Activated T-helper 2 cell treated with anti-CD3 and anti-CD28 coated beads, Interferon-gamma antibody, Interleukin-2, Interleukin-4, amounts not matched to agents 10 μg/mL and 5 μg/mL and 100 μg/mL, durations not matched to agents 14 hours and 24 hours and 36 hours (primary cell): ENCODE measurements at regions of chr2 and their contacts with region 1.

Region 1: DNA sequence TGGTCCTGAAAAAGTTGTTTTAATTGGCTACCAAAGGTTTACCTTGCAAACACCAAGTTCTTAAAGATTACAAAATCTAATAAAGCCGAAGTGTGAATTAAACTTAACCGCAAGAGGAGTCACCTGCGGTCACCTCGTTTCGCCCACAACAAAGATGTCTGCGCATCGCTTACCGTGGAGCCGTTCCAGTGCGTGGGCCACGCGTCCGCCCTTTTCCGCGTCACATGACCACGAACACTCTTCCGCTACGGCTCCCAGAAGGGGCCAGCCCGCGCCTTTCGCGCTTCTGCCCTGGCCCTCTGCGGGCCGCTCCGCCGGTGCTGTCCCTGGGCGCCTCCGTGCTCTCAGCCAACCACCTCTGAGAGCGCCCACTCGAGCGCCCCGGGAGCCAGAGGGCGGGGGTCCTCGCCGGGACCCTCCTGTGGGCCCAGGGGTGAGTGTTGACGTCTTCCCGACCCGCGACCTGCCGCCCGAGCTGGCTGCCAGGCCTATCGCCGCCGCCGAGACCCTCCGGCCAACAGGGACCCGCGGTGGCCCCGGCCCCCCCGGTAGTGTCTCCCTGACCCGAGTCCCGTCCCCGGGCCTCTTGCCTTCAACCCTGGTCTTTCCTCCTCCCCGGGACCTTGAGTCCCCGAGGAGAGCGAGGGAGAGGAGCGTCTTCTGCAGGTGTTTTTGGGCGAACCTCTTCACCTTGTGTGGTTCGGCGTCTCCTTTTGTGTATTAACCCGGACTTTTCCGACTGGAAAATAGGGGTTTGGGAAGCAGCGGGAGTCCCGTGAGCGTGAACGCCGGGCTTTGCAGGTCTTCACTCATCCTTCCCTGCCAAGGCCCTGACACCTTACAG is at the start of gene MFF:
- DNase-seq: peak; percentile 89
- H3K4me3 Mint-ChIP-seq: peak within 1 kb of the TSS; percentile 90
- H3K27ac Mint-ChIP-seq: peak within 1 kb of the TSS; percentile 90
- H3K4me1 Mint-ChIP-seq: peaks cover 31% of the 10 kb centered on the region
- H3K27me3 Mint-ChIP-seq: peaks cover 5% of the 10 kb centered on the region
- total RNA-seq, gene MFF: 74.4 and 77.3 TPM in 2 replicates

Region 2: DNA sequence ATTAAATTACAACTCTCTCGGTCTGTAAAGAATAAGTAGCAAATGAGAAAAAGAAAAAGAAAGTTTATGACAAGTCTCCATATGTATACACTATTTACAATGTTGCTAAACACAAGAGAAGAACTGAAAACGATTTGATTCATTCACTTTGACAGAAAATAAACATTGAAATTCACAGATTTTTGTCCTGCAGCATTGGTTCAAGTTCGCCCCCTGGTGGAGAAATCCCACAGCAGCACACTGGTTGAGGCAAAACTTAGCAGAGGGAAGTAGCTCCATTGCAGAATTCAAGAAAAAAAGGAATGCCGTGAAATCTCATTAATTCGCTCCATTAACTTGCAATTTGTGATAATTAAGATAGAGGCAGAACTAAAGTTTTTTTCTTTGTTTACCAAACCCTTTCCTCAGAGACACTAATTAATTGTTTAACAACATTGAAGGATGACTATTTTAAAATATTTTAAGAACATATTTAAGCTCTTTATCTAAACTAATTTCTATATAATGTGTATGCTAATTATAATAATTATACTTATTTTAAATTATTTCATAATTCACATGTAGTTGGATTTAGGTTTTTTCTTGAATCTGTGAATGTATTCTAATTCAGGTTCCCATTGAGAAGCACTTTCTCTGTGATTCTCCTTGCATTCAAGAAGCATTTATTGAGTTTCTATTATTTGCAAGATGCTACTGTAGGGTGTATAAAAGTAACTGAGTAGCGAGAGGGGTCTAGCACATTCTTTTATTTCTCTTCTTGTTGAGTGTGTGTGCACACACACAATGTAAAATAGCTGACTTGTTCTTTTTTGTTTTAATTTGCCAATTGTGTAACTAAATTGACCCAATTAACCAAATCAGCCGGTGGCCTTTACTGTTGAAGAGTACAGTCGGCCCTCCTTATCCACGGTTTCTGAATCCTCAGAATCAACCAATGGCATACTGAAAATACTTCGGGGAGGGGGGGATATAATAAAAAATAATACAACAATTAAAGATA is 86.7 kb before region 1 on chr2:
- intact Hi-C with region 1: no loop called
- DNase-seq: peak; percentile 14
- H3K4me3 Mint-ChIP-seq: no peak overlapping the region
- H3K27ac Mint-ChIP-seq: no peak overlapping the region
- H3K4me1 Mint-ChIP-seq: no peaks in the 10 kb centered on the region
- H3K27me3 Mint-ChIP-seq: peaks cover 6% of the 10 kb centered on the region

Region 3: GRCh38 chr2:227335713-227336112 is 10.5 kb after region 1 on chr2:
- intact Hi-C with region 1: loop called (anchors 1 kb)
- DNase-seq: no peak
- H3K4me3 Mint-ChIP-seq: no peak overlapping the region
- H3K27ac Mint-ChIP-seq: peak overlapping the region; percentile 72
- H3K4me1 Mint-ChIP-seq: peaks cover 27% of the 10 kb centered on the region
- H3K27me3 Mint-ChIP-seq: no peaks in the 10 kb centered on the region

Region 4: DNA sequence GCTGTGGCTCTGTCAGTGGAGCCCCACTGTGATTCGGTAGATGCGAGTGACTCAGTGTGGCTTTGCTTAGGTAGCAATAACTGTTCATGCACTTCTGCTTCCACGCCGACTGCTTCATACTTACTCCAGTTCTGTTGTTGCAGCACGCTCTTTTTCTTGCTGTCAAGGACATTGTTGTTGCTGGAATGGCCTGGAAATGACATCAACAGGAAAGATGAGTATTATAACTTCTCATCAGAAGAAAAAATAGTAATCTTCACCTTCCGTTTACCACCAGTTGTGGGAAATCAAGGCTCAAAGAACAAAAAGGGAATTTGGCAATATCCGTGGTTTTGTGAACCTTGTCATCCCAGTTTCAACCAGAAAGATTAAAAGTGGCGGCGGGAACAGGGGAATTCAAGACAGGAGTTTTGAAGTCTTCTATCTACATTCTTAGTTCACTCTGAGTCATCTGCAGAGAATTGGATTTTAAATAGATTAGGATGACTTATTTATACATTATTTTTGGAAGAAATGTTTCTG is 45.6 kb after region 1 on chr2:
- intact Hi-C with region 1: loop called (anchors 2 kb)
- DNase-seq: no peak
- H3K4me3 Mint-ChIP-seq: no peak overlapping the region
- H3K27ac Mint-ChIP-seq: no peak overlapping the region
- H3K4me1 Mint-ChIP-seq: peaks cover 6% of the 10 kb centered on the region
- H3K27me3 Mint-ChIP-seq: no peaks in the 10 kb centered on the region

Region 5: DNA sequence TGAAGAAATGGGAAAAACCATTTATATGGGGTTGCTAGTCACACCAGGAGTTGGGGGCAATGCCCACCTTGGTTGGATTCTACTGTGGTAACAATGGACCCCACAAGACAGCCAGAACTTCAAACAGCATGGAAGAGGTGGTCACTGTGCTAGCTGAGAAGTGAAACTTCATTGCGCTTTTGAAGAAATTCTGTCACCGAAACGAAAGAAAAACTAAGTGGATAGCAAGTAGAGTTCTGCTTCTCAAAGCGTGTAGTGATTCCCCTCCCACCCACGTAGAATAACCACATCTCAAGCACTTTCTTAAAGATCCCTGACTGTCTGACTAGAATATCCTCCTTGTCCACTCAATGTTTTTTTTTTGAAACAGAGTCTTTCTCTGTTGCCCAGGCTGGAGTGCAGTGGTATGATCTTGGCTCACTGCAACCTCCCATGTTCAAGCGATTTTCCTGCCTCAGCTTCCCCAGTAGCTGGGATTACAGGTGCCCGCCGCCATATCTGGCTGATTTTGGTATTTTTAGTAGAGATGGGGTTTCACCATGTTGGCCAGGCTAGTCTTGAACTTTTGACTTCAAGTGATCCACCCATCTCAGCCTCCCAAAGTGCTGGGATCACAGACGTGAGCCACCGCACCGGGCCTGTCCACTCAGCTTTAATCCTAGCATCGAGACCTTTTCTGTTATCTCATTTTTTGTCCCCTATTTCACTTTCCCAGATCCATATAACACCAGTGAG is 458.4 kb after region 1 on chr2:
- intact Hi-C with region 1: loop called (anchors 1 kb)
- DNase-seq: no peak
- H3K4me3 Mint-ChIP-seq: peak overlapping the region; percentile 22
- H3K27ac Mint-ChIP-seq: peak overlapping the region; percentile 19
- H3K4me1 Mint-ChIP-seq: peaks cover 12% of the 10 kb centered on the region
- H3K27me3 Mint-ChIP-seq: no peaks in the 10 kb centered on the region